Naive thymus-derived CD4-positive, alpha-beta T cell (primary cell): ENCODE measurements at regions of chr9 and their contacts with region 1.

Region 1: DNA sequence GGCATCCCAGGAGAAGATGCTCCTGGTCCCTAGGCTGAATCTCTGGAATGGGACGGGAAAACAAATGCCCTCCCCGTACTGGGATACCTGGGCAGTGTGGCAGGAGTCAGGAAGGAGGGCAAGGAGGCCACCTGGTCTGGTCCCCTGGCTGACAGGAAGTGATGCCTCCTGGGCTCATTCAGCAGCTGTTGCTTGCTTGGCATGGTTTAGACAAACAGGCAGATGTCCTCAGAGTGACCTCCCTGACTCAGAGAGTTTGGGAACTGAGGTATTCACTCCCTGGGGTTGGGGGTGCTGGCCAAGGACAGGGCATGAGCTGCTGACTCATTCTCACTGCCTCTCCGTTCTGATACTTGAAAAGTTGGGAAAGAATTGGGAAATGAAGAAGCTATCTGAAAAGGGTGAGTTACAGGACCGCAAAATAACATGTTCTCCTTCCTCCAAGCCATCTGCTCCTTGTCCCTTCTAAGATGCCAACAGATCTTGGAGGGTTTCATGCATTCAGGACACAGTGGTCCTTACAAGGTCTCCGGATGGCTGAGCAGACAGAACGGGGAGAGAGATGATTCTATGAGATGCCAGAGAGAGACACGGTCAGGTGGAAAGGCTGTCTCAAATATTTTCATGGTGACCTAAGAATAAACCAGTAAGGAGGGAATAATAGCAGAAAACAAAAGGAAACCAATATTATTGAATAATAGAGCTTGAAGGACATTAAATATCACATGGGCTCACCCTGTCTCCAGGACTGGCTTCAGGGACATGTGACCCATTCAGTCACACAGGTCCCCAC is 534.5 kb downstream of the BNC2 start:
- DNase-seq: no peak
- ATAC-seq: no peak
- H3K4me3 ChIP-seq: no peak overlapping the region
- H3K4me3 Mint-ChIP-seq: no peak overlapping the region
- H3K27ac ChIP-seq: no peak overlapping the region
- H3K27ac Mint-ChIP-seq: no peak overlapping the region
- H3K4me1 ChIP-seq: no peaks in the 10 kb centered on the region
- H3K4me1 Mint-ChIP-seq: peaks cover 0 to 4% (median 0%) of the 10 kb centered on the region in 7 donors
- H3K27me3 ChIP-seq: no peaks in the 10 kb centered on the region
- H3K27me3 Mint-ChIP-seq: no peaks in the 10 kb centered on the region

Region 2: GRCh38 chr9:16275795-16276624 is 60.0 kb before region 1 on chr9:
- CTCF ChIA-PET with region 1: no interaction called
- POLR2A ChIA-PET with region 1: no interaction called
- intact Hi-C with region 1: loop called in 1 of 2 experiments (anchors 10 kb)
- DNase-seq: no peak
- ATAC-seq: no peak
- H3K4me3 ChIP-seq: no peak overlapping the region
- H3K4me3 Mint-ChIP-seq: no peak overlapping the region
- H3K27ac ChIP-seq: no peak overlapping the region
- H3K27ac Mint-ChIP-seq: no peak overlapping the region
- H3K4me1 ChIP-seq: no peaks in the 10 kb centered on the region
- H3K4me1 Mint-ChIP-seq: no peaks in the 10 kb centered on the region
- H3K27me3 ChIP-seq: no peaks in the 10 kb centered on the region
- H3K27me3 Mint-ChIP-seq: no peaks in the 10 kb centered on the region

Region 3: DNA sequence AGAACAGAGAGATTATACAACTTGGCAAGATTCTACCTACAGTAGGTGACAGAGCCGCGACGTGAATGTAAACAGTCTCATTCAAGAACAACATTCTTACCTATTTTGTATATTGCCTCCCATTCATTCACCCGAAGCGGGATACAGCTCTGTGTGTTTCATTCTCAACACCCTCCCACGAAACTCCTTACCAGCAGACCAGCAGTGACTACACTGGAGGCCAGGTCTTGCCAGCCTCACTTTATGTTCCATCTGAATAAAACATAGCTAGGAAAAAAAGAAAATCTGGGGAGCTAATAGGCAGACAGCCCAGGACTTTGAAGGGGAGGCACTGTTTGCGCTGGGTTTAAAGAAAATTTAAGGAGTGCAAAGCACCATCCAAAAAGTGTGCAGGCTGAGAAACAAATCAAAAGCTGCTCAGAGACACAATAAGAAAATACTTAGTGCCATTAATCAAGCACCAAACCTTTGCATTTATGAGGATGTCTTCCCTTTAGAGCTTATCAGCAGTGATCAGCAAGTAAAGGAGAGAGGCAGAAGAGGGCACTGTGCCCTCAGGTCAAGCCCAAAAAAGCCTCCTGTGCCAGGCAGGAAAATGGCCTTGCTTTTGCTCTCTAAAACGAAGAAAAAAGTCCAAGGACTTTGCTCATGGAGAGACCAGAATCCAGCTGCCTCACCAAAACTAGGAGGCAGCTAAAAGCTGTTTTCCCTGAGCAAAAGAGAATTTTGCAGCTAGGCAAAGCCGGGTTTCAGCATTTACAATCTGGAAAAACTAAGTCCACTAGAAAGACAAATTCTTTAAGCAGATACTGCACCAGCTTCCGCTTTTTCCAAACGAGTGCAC is 239.4 kb after region 1 on chr9:
- CTCF ChIA-PET with region 1: no interaction called
- POLR2A ChIA-PET with region 1: no interaction called
- intact Hi-C with region 1: no loop called
- DNase-seq: no peak
- ATAC-seq: no peak
- H3K4me3 ChIP-seq: no peak overlapping the region
- H3K4me3 Mint-ChIP-seq: no peak overlapping the region
- H3K27ac ChIP-seq: no peak overlapping the region
- H3K27ac Mint-ChIP-seq: no peak overlapping the region
- H3K4me1 ChIP-seq: no peaks in the 10 kb centered on the region
- H3K4me1 Mint-ChIP-seq: no peaks in the 10 kb centered on the region
- H3K27me3 ChIP-seq: no peaks in the 10 kb centered on the region
- H3K27me3 Mint-ChIP-seq: no peaks in the 10 kb centered on the region